Aorta (tissue), 5 donors: ENCODE measurements at regions of chr16 and their contacts with region 1.

Region 1: DNA sequence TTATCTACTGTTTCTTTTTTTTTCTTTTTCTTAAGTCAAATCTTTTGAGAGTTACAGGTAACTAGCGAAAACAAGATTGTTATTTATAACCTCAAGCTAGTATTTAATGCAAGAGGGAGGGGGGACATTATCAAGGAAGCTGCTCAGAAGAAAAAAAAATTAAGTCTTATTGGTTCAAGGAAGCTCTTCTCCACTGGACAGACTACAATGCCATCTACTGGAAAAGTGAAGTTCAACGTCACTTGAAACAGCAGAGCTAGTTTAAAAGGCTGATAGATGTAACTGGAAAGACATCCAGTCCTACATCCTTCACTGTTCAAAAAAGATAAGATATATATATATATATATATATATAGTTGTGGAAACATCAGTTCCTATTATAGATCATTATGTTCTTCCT is 418.0 kb upstream of the PSMD7 start:
- DNase-seq: no peak
- ATAC-seq: no peak
- H3K4me3 ChIP-seq: no peak overlapping the region
- H3K27ac ChIP-seq: no peak overlapping the region
- H3K4me1 ChIP-seq: no peaks in the 10 kb centered on the region
- H3K27me3 ChIP-seq: no peaks in the 10 kb centered on the region

Region 2: DNA sequence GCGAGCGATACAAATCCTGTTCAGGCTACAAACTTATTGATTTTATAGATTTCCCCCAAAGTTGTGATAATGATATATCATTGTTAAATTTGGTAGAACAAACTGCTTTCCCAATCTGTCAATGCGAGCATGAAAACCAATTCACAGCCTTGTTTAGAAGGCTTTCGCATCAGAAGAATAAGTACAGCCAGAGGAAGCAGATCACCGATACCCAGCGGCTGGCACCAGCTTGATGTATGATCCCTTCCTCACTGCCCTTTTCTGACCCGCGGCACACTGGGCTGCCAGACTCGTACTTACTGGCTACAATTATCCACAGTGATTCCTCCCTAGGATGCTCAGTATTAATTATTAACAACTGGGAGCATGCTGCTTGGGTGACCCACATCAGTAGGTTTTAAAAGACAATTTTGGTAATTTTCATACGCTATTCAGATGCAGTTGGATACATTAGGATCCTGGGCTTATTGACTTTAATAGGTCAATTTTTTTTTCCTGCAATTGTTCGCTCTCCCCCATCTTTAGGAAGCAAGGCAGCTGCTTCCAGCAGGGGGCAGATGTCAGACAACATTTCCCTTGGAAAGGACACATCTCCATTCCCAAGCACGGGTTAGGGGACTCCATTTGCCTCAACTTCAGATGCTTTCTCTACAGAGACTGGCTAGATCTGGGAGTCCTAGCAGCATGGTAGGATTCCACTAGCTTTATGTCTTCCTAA is 164.7 kb before region 1 on chr16:
- intact Hi-C with region 1: loop called in 1 of 2 experiments (anchors 2 kb)
- DNase-seq: no peak
- ATAC-seq: no peak
- H3K4me3 ChIP-seq: no peak overlapping the region
- H3K27ac ChIP-seq: no peak overlapping the region
- H3K4me1 ChIP-seq: peaks cover 0 to 2% of the 10 kb centered on the region in 2 donors
- H3K27me3 ChIP-seq: no peaks in the 10 kb centered on the region